ENCODE measurements at regions of chr7 and their contacts with region 1.

Region 1: DNA sequence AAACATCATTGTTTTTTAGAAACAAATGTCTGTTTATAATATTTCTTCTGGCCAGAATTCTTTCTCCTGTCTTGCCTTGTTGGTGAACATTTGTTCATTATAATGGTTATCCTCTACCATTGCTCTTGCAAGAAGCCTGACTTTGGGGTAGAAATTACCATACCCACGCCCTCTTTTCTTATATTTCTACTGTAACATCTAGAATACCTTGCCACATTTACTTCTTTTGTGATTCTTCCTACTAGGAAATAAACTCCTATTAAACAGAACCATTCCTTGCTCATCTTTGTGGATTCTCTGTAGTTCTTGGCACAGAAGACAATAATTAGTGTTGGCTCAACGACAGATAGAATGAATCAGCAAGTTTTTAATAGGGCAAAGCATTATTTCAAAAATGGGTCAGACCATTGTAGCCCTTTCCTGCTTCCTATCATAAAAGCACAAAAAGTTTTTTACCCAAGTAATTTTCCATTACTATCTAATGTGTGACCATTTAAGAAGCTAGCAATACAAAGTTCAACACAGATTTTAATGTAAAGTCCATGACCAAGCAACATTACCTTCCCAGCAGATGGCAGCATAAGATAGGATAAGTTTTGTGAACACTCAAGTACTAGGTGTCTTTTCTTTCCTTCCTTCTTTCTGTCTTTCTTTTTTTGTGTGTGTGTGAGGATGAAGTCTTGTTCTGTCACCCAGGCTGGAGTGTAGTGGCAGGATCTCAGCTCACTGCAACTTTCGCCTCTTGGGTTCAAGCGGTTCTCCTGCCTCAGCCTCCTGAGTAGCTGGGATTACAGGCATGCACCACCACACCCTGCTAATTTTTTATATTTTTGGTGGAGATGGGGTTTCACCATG is 270.4 kb downstream of the HGF start:
- DNase-seq: no peak
- H3K4me3 ChIP-seq: no peak overlapping the region
- H3K27ac ChIP-seq: no peak overlapping the region
- H3K4me1 ChIP-seq: peaks cover 0 to 4% of the 10 kb centered on the region in 2 donors
- H3K27me3 ChIP-seq: no peaks in the 10 kb centered on the region
- CTCF ChIP-seq: peak; percentile 52 to 68 (median 59)

Region 2: GRCh38 chr7:81659697-81660395 is 160.4 kb after region 1 on chr7:
- intact Hi-C with region 1: no loop called
- DNase-seq: no peak
- H3K4me3 ChIP-seq: no peak overlapping the region
- H3K27ac ChIP-seq: peak overlapping the region; percentile 14 to 32
- H3K4me1 ChIP-seq: peaks cover 0 to 2% of the 10 kb centered on the region in 2 donors
- H3K27me3 ChIP-seq: no peaks in the 10 kb centered on the region
- CTCF ChIP-seq: no peak

Region 3: GRCh38 chr7:81715984-81716588 is 216.6 kb after region 1 on chr7:
- intact Hi-C with region 1: loop called (anchors 2 kb)
- DNase-seq: no peak
- H3K4me3 ChIP-seq: no peak overlapping the region
- H3K27ac ChIP-seq: no peak overlapping the region
- H3K4me1 ChIP-seq: no peaks in the 10 kb centered on the region
- H3K27me3 ChIP-seq: no peaks in the 10 kb centered on the region
- CTCF ChIP-seq: peak in 2 of 3 experiments; percentile 32 to 50

Region 4: GRCh38 chr7:81956520-81956919 is 457.0 kb after region 1 on chr7:
- intact Hi-C with region 1: loop called (anchors 2 kb)
- DNase-seq: no peak
- H3K4me3 ChIP-seq: no peak overlapping the region
- H3K27ac ChIP-seq: no peak overlapping the region
- H3K4me1 ChIP-seq: peaks cover 0 to 2% of the 10 kb centered on the region in 2 donors
- H3K27me3 ChIP-seq: no peaks in the 10 kb centered on the region
- CTCF ChIP-seq: no peak

Region 5: GRCh38 chr7:82017334-82017943 is 518.0 kb after region 1 on chr7:
- intact Hi-C with region 1: loop called (anchors 5 kb)
- DNase-seq: no peak
- H3K4me3 ChIP-seq: no peak overlapping the region
- H3K27ac ChIP-seq: no peak overlapping the region
- H3K4me1 ChIP-seq: peaks cover 0 to 9% of the 10 kb centered on the region in 2 donors
- H3K27me3 ChIP-seq: no peaks in the 10 kb centered on the region
- CTCF ChIP-seq: peak; percentile 11 to 43 (median 29)